ENCODE measurements at regions of chr5 and their contacts with region 1.

Region 1: GRCh38 chr5:138352071-138352721 is at the start of gene KDM3B:
- DNase-seq: peak; percentile 84 to 96 (median 93)
- H3K4me3 ChIP-seq: peak within 1 kb of the TSS; percentile 84
- H3K4me3 Mint-ChIP-seq: peak within 1 kb of the TSS; percentile 90 to 100 (median 96)
- H3K27ac ChIP-seq: peak within 1 kb of the TSS; percentile 88
- H3K27ac Mint-ChIP-seq: peak within 1 kb of the TSS; percentile 91 to 99 (median 96)
- H3K4me1 ChIP-seq: peaks cover 25% of the 10 kb centered on the region
- H3K4me1 Mint-ChIP-seq: peaks cover 48 to 56% (median 52%) of the 10 kb centered on the region in 3 donors
- H3K27me3 ChIP-seq: no peaks in the 10 kb centered on the region
- H3K27me3 Mint-ChIP-seq: peaks cover 0 to 12% of the 10 kb centered on the region in 2 donors
- total RNA-seq, gene KDM3B: 42.4 to 44.7 TPM

Region 2: DNA sequence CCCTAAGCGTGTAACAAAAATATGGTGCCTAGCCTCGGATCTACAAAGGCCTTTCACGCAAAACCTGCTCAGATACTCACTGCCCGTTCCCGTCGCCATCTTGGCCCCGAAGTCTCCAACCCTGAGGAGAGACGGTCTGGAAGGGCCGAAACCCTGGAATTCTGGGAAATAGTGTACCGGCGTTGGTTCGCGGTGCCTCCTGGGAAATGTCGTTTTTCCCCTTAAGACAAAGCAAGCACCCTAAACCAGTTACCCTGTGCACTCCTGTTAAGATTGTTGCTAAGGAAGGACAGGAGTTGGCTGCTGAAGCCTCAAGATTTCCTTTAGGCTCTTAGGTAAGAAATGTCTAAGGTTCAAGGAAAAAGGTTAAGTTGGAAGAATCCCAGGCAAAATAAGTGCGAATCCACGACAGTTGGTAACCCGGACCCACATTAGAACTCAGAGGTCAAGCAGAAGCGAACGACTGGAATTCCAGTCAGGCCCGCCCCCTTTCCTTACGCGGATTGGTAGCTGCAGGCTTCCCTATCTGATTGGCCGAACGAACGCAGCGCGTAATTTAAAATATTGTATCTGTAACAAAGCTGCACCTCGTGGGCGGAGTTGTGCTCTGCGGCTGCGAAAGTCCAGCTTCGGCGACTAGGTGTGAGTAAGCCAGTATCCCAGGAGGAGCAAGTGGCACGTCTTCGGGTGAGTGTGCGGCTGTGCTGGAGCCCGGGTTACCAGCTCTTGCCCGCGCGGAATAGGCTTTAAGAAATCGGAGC is 173.5 kb before region 1 on chr5 and contains the starts of genes BRD8 and KIF20A:
- CTCF ChIA-PET with region 1: interaction called, 8 read pairs
- POLR2A ChIA-PET with region 1: interaction called, 12 read pairs
- DNase-seq: peak; percentile 84 to 91 (median 84)
- H3K4me3 ChIP-seq: peak within 1 kb of the TSS; percentile 90
- H3K4me3 Mint-ChIP-seq: peak within 1 kb of the TSS in 2 of 7 donors; percentile 32 to 50
- H3K27ac ChIP-seq: peak within 1 kb of the TSS; percentile 62
- H3K27ac Mint-ChIP-seq: peak within 1 kb of the TSS in 5 of 8 donors; percentile 27 to 75 (median 47)
- H3K4me1 ChIP-seq: peaks cover 13% of the 10 kb centered on the region
- H3K4me1 Mint-ChIP-seq: peaks cover 5 to 17% (median 8%) of the 10 kb centered on the region in 3 donors
- H3K27me3 ChIP-seq: no peaks in the 10 kb centered on the region
- H3K27me3 Mint-ChIP-seq: no peaks in the 10 kb centered on the region
- total RNA-seq, gene BRD8: 62.6 to 64.8 TPM
- total RNA-seq, gene KIF20A: 27.2 to 29.3 TPM

Region 3: GRCh38 chr5:138213161-138214029 is 138.8 kb before region 1 on chr5 and contains the start of gene CDC23:
- CTCF ChIA-PET with region 1: interaction called, 22 read pairs
- POLR2A ChIA-PET with region 1: interaction called, 5 read pairs
- DNase-seq: peak; percentile 82 to 94 (median 92)
- H3K4me3 ChIP-seq: peak within 1 kb of the TSS; percentile 95
- H3K4me3 Mint-ChIP-seq: peak within 1 kb of the TSS; percentile 95 to 99 (median 98)
- H3K27ac ChIP-seq: peak within 1 kb of the TSS; percentile 92
- H3K27ac Mint-ChIP-seq: peak within 1 kb of the TSS; percentile 76 to 98 (median 97)
- H3K4me1 ChIP-seq: peaks cover 21% of the 10 kb centered on the region
- H3K4me1 Mint-ChIP-seq: peaks cover 23 to 29% (median 29%) of the 10 kb centered on the region in 3 donors
- H3K27me3 ChIP-seq: no peaks in the 10 kb centered on the region
- H3K27me3 Mint-ChIP-seq: peaks cover 0 to 3% of the 10 kb centered on the region in 2 donors
- total RNA-seq, gene CDC23: 48.7 to 49.7 TPM

Region 4: DNA sequence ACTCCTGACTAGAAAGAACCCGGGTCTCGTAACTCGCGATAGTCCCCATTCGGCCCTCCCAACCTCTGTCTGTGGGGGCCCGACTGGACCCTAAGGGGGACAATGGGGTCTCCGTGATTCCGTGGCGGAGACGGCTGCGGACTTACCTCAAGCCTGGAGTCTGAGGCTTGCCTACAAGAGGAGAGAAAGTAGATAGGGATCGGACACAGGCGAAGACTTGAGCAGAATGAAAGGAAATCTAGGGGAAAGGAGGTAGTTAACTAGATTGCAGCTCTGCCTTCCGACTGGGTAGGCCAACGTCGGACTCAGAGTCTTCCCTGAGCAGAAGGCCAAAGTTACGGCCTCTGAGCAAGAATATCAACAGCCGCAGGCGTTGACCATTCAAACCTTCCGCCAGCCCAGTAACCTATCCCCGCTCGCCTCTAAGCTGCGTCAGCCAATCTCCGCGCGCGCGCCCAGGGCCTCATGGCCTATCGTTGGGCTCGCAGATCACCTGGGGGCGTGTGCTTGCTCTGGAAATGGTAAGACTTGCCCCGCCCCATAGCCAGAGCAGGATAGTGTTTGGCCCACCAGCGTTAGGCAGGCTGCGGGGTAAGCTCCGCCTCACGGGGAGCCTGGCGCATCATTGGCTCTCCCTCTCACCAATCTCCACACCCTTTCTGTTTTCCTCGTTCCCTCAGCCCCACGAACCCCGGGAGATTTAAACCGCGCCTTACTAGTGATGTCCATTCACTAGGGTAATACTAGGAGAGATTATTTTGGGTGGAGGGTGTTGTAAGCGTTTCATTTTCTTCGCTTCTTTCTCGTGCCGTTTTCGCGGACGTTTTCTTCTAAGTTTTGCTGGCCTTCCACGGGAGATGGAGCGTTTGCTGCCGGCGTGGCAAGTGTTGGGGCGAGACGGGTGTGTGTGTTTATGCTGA is 20.5 kb before region 1 on chr5 and contains the start of gene CDC25C:
- CTCF ChIA-PET with region 1: interaction called, 266 read pairs
- POLR2A ChIA-PET with region 1: interaction called, 120 read pairs
- DNase-seq: peak; percentile 96 to 98 (median 96)
- H3K4me3 ChIP-seq: peak within 1 kb of the TSS; percentile 79
- H3K4me3 Mint-ChIP-seq: peak within 1 kb of the TSS; percentile 79 to 91 (median 86)
- H3K27ac ChIP-seq: peak within 1 kb of the TSS; percentile 45
- H3K27ac Mint-ChIP-seq: peak within 1 kb of the TSS; percentile 21 to 82 (median 58)
- H3K4me1 ChIP-seq: peaks cover 9% of the 10 kb centered on the region
- H3K4me1 Mint-ChIP-seq: peaks cover 12 to 19% (median 18%) of the 10 kb centered on the region in 3 donors
- H3K27me3 ChIP-seq: no peaks in the 10 kb centered on the region
- H3K27me3 Mint-ChIP-seq: no peaks in the 10 kb centered on the region
- total RNA-seq, gene CDC25C: 4.3 to 5.3 TPM

Region 5: GRCh38 chr5:138337685-138338410 is 14.3 kb before region 1 on chr5 and contains the start of gene FAM53C:
- CTCF ChIA-PET with region 1: interaction called, 266 read pairs
- POLR2A ChIA-PET with region 1: interaction called, 120 read pairs
- DNase-seq: peak; percentile 83 to 95 (median 91)
- H3K4me3 ChIP-seq: peak within 1 kb of the TSS; percentile 70
- H3K4me3 Mint-ChIP-seq: peak within 1 kb of the TSS; percentile 91 to 99 (median 94)
- H3K27ac ChIP-seq: peak within 1 kb of the TSS; percentile 85
- H3K27ac Mint-ChIP-seq: peak within 1 kb of the TSS; percentile 95 to 100 (median 99)
- H3K4me1 ChIP-seq: peaks cover 31% of the 10 kb centered on the region
- H3K4me1 Mint-ChIP-seq: peaks cover 36 to 42% (median 41%) of the 10 kb centered on the region in 3 donors
- H3K27me3 ChIP-seq: no peaks in the 10 kb centered on the region
- H3K27me3 Mint-ChIP-seq: peaks cover 0 to 2% of the 10 kb centered on the region in 2 donors
- total RNA-seq, gene FAM53C: 29.5 to 32.2 TPM

Region 6: DNA sequence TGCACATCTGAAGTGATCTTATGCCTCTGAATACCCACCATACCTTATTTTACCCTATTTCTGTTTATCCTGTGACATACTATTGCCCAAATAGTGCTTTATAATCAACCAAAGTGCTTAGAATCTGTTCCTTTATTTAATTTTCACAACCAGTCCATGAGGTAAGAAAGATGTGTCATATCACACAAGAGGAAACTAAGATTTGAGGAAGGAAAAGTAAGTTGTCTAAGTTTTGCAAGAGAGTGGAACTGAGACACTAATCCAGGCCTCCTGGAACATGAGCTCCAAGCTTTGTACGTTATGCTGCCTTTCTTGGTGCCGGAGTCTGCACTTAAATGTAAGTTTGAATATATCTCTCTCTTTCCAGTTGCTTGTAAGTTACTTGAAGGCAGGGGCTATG is 17.5 kb after region 1 on chr5:
- CTCF ChIA-PET with region 1: interaction called, 27 read pairs
- POLR2A ChIA-PET with region 1: interaction called, 4 read pairs
- DNase-seq: no peak
- H3K4me3 ChIP-seq: no peak overlapping the region
- H3K4me3 Mint-ChIP-seq: no peak overlapping the region
- H3K27ac ChIP-seq: no peak overlapping the region
- H3K27ac Mint-ChIP-seq: peak overlapping the region in 1 of 8 donors; percentile 18
- H3K4me1 ChIP-seq: peaks cover 33% of the 10 kb centered on the region
- H3K4me1 Mint-ChIP-seq: peaks cover 40 to 68% (median 52%) of the 10 kb centered on the region in 3 donors
- H3K27me3 ChIP-seq: no peaks in the 10 kb centered on the region
- H3K27me3 Mint-ChIP-seq: no peaks in the 10 kb centered on the region

Region 7: DNA sequence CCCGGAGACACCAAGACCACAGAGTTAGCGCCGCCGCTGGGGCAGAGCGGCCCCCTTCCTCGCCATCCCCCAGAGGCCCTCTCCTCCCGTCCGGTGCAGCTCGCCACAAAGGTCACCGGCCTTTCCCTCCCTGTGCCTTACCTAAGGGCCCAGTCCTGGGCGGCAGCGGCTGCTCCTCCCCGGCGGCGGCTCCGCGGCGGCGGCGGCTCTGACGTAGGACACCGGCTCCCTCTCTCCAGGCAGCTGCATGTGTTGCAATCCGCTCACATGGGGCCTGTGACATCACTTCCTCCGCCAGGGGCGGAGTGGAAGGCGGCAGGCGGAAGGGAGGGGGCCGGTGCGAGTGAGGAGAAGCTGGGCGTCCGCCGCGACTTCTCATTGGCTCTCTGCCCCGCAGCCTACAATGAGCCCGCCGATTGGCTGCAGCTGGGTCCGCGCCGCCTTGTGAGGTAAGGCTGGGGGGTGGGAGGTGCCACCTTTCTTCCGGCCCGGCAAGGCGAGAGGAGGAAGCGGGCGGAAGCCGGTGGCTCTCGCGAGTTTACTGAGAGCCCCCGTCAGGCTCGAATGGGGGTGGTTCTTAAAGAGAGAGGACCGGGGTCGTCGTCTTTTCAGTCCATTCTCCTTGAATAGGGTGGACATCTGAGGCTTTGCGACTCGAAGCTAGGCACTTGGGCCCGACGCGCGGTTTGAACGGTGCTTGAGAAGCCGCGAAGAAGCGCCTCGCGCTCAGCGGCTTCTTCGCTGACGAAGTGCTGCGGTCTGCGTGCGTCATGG is 190.9 kb after region 1 on chr5 and contains the start of gene ETF1:
- CTCF ChIA-PET with region 1: interaction called, 6 read pairs
- POLR2A ChIA-PET with region 1: interaction called, 10 read pairs
- DNase-seq: peak; percentile 99 to 100 (median 100)
- H3K4me3 ChIP-seq: peak within 1 kb of the TSS; percentile 89
- H3K4me3 Mint-ChIP-seq: peak within 1 kb of the TSS; percentile 96 to 100 (median 98)
- H3K27ac ChIP-seq: peak within 1 kb of the TSS; percentile 99
- H3K27ac Mint-ChIP-seq: peak within 1 kb of the TSS; percentile 99 to 100 (median 100)
- H3K4me1 ChIP-seq: peaks cover 75% of the 10 kb centered on the region
- H3K4me1 Mint-ChIP-seq: peaks cover 71 to 94% (median 75%) of the 10 kb centered on the region in 3 donors
- H3K27me3 ChIP-seq: no peaks in the 10 kb centered on the region
- H3K27me3 Mint-ChIP-seq: no peaks in the 10 kb centered on the region
- total RNA-seq, gene ETF1: 239 to 246 TPM

Measured in CD8-positive, alpha-beta memory T cell (primary cell).